ENCODE measurements at regions of chr16 and their contacts with region 1.

Region 1: DNA sequence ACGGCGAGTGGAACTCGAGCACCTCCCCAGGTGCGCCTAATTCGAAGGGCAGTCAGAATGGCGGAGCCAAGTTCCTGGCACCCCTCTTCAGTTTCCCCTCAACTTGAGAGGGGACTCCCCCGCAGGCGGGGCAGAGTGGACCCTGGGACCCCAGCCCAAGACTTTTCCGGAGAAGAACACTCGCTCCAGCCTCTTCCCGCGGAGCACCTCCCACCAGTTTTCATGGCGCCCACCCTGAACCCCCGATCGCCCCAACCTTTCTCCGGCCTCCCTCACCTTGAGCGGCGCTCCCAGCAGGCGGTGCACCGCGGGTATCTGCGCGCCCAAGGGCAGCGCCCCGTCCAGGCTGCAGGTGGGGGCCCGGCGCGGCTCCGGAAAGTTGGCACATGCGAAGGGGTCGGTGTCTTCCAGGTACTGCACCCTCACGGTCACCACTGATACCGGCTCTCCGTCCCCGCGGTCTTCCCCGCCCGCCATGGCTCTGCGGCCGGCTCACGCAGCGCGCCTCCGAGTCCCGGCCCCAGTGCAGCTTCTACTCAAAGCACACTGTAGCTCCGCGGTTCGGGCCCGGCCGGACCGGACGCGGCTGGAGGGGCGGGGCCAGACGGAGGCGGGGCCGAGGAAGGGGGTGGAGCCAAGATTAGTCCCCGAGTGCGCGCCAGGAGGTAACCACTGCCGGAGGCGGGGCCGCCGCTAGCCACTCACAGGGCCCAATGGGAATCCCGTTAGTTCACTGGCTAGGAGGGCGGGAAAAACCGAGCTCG is at the start of gene FHOD1:
- DNase-seq: peak; percentile 99
- H3K4me3 ChIP-seq: peak within 1 kb of the TSS; percentile 44 to 87 (median 72)
- H3K27ac ChIP-seq: peak within 1 kb of the TSS; percentile 80 to 89 (median 83)
- H3K4me1 ChIP-seq: peaks cover 0 to 58% (median 44%) of the 10 kb centered on the region in 4 donors
- H3K27me3 ChIP-seq: peaks cover 7 to 40% (median 22%) of the 10 kb centered on the region in 3 donors
- CTCF ChIP-seq: no peak
- EP300 ChIP-seq: no peak
- POLR2A ChIP-seq: peak; percentile 62 to 73
- total RNA-seq, gene FHOD1: 6.7 to 17.1 (median 11.5) TPM

Region 2: GRCh38 chr16:67183627-67184328 is 63.3 kb before region 1 on chr16 and contains the start of gene MATCAP1:
- intact Hi-C with region 1: loop called (anchors 1 kb)
- DNase-seq: peak; percentile 98
- H3K4me3 ChIP-seq: peak within 1 kb of the TSS; percentile 68 to 79 (median 73)
- H3K27ac ChIP-seq: peak within 1 kb of the TSS; percentile 91 to 96 (median 94)
- H3K4me1 ChIP-seq: peaks cover 0 to 39% (median 33%) of the 10 kb centered on the region in 4 donors
- H3K27me3 ChIP-seq: no peaks in the 10 kb centered on the region
- CTCF ChIP-seq: no peak
- EP300 ChIP-seq: peak in 2 of 4 donors; percentile 41 to 55
- POLR2A ChIP-seq: peak in 1 of 2 donors; percentile 41
- total RNA-seq, gene MATCAP1: 6.6 to 22.2 (median 9.7) TPM

Region 3: GRCh38 chr16:67226804-67227557 is 20.1 kb before region 1 on chr16 and contains the start of gene TMEM208:
- intact Hi-C with region 1: loop called (anchors 1 kb)
- DNase-seq: peak; percentile 99
- H3K4me3 ChIP-seq: peak within 1 kb of the TSS; percentile 86 to 99 (median 90)
- H3K27ac ChIP-seq: peak within 1 kb of the TSS; percentile 81 to 85 (median 83)
- H3K4me1 ChIP-seq: peaks cover 0 to 26% (median 21%) of the 10 kb centered on the region in 4 donors
- H3K27me3 ChIP-seq: no peaks in the 10 kb centered on the region
- CTCF ChIP-seq: peak in 1 of 4 experiments; percentile 7
- EP300 ChIP-seq: peak in 1 of 4 donors; percentile 46
- POLR2A ChIP-seq: peak; percentile 73 to 83
- total RNA-seq, gene TMEM208: 15.3 to 31.4 (median 24.2) TPM

Region 4: GRCh38 chr16:67399181-67399733 is 152.1 kb after region 1 on chr16:
- intact Hi-C with region 1: loop called (anchors 5 kb)
- DNase-seq: no peak
- H3K4me3 ChIP-seq: peak overlapping the region in 1 of 4 donors; percentile 22
- H3K27ac ChIP-seq: no peak overlapping the region
- H3K4me1 ChIP-seq: peaks cover 0 to 47% (median 36%) of the 10 kb centered on the region in 4 donors
- H3K27me3 ChIP-seq: peaks cover 0 to 28% (median 7%) of the 10 kb centered on the region in 3 donors
- CTCF ChIP-seq: peak; percentile 33 to 77 (median 52)
- EP300 ChIP-seq: no peak
- POLR2A ChIP-seq: no peak

Measured in sigmoid colon (tissue), 7 donors.